ENCODE measurements at regions of chr2 and their contacts with region 1.

Region 1: GRCh38 chr2:98649135-98649991 is 41.0 kb downstream of the UNC50 start:
- DNase-seq: peak; percentile 90
- H3K4me3 Mint-ChIP-seq: no peak overlapping the region
- H3K27ac Mint-ChIP-seq: peak overlapping the region; percentile 68
- H3K4me1 Mint-ChIP-seq: peaks cover 57% of the 10 kb centered on the region
- H3K27me3 Mint-ChIP-seq: no peaks in the 10 kb centered on the region

Region 2: GRCh38 chr2:98731041-98731893 is 81.9 kb after region 1 on chr2 and contains the start of gene MGAT4A:
- CTCF ChIA-PET with region 1: interaction called, 10 read pairs
- DNase-seq: peak; percentile 85
- H3K4me3 Mint-ChIP-seq: peak within 1 kb of the TSS; percentile 86
- H3K27ac Mint-ChIP-seq: peak within 1 kb of the TSS; percentile 94
- H3K4me1 Mint-ChIP-seq: peaks cover 68% of the 10 kb centered on the region
- H3K27me3 Mint-ChIP-seq: no peaks in the 10 kb centered on the region

Region 3: GRCh38 chr2:98757904-98758421 is 108.6 kb after region 1 on chr2:
- CTCF ChIA-PET with region 1: interaction called, 10 read pairs
- DNase-seq: peak; percentile 71
- H3K4me3 Mint-ChIP-seq: peak overlapping the region; percentile 62
- H3K27ac Mint-ChIP-seq: peak overlapping the region; percentile 93
- H3K4me1 Mint-ChIP-seq: peaks cover 59% of the 10 kb centered on the region
- H3K27me3 Mint-ChIP-seq: no peaks in the 10 kb centered on the region

Region 4: GRCh38 chr2:98835831-98836385 is 186.5 kb after region 1 on chr2:
- CTCF ChIA-PET with region 1: interaction called, 58 read pairs
- DNase-seq: peak; percentile 58
- H3K4me3 Mint-ChIP-seq: peak overlapping the region; percentile 39
- H3K27ac Mint-ChIP-seq: peak overlapping the region; percentile 91
- H3K4me1 Mint-ChIP-seq: peaks cover 53% of the 10 kb centered on the region
- H3K27me3 Mint-ChIP-seq: peaks cover 7% of the 10 kb centered on the region

Region 5: GRCh38 chr2:99066075-99066958 is 417.0 kb after region 1 on chr2:
- CTCF ChIA-PET with region 1: interaction called, 16 read pairs
- DNase-seq: peak; percentile 68
- H3K4me3 Mint-ChIP-seq: no peak overlapping the region
- H3K27ac Mint-ChIP-seq: no peak overlapping the region
- H3K4me1 Mint-ChIP-seq: peaks cover 6% of the 10 kb centered on the region
- H3K27me3 Mint-ChIP-seq: no peaks in the 10 kb centered on the region